HepG2 (cell line): ENCODE measurements at regions of chr11 and their contacts with region 1.

Region 1: DNA sequence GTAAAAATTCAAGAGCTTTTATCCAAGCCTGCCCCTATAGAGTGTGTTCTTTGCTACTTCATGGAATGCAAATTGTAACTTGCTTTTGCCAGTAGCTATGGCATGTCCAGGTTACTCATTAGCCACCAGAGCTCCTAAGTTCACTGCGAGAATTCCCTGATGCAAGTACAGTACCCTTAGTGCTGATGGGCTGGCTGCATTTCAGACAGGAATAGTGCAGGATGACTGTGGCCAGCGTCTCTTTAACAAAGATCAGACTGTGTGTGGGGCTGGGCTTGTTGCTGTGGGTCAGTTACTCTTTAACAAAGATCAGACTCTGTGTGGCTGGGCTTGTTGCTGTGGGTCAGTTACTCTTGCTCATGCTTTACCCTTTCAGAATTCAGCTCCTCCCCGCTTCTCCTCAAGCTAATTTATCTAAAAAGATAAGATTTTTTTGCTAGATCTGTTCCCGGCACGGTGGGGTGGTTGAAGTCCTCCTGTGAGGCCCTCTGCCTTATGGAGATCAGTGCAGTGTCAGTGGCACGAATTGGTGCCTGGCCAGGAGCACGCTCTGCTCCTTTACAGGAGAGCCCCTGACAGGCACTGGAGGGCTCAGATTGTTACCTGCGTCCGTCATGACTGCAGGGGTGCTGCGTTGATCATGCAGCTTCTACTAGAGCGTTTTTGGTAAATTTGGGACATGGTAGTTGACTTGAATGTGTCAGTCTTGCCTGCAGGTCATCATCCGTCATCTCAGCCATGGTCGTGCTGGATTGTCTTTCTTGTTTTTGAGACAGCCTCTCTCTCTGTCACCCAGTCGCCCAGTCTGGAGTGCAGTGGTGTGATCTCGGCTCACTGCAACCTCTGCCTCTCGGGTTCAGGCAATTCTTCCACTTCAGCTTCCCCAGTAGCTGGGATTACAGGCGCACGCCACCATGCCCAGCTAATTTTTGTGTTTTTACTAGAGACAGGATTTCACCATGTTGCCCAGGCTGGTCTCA is 27.0 kb downstream of the AP2A2 start:
- DNase-seq: peak; percentile 99
- ATAC-seq: peak; percentile 98
- H3K4me3 ChIP-seq: peak overlapping the region; percentile 25 to 68 (median 50); a peak in 5 of 6 replicates
- H3K27ac ChIP-seq: peak overlapping the region; percentile 95
- H3K4me1 ChIP-seq: peaks cover 85% of the 10 kb centered on the region
- H3K27me3 ChIP-seq: no peaks in the 10 kb centered on the region
- CTCF ChIP-seq: no peak; the same call in 1 of the 2 replicates
- EP300 ChIP-seq: peak in 1 of 2 experiments; percentile 77; a peak in 2 of 4 replicates
- POLR2A ChIP-seq: peak; percentile 65 to 67; a peak in 3 of 4 replicates
- RAD21 ChIP-seq: 0 out of 2 replicates have a peak, but pooled peaks have one; percentile 20

Region 2: GRCh38 chr11:520428-521176 is 432.1 kb before region 1 on chr11:
- CTCF ChIA-PET with region 1: no interaction called
- POLR2A ChIA-PET with region 1: no interaction called
- in situ Hi-C with region 1: no loop called
- intact Hi-C with region 1: no loop called
- DNase-seq: peak; percentile 28
- ATAC-seq: peak; percentile 77
- H3K4me3 ChIP-seq: no peak overlapping the region; a peak in 1 of 6 replicates
- H3K27ac ChIP-seq: no peak overlapping the region
- H3K4me1 ChIP-seq: peaks cover 40% of the 10 kb centered on the region
- H3K27me3 ChIP-seq: 0 out of 5 replicates have a peak, but pooled peaks cover 0 to under 1% of the 10 kb centered on the region in 2 experiments
- CTCF ChIP-seq: peak; percentile 83
- EP300 ChIP-seq: no peak
- POLR2A ChIP-seq: no peak
- RAD21 ChIP-seq: peak; percentile 28; the same call in 1 of the 2 replicates

Region 3: GRCh38 chr11:662689-663274 is 289.9 kb before region 1 on chr11:
- CTCF ChIA-PET with region 1: no interaction called
- POLR2A ChIA-PET with region 1: no interaction called
- in situ Hi-C with region 1: no loop called
- intact Hi-C with region 1: no loop called
- DNase-seq: peak; percentile 39
- ATAC-seq: peak; percentile 84
- H3K4me3 ChIP-seq: no peak overlapping the region
- H3K27ac ChIP-seq: no peak overlapping the region
- H3K4me1 ChIP-seq: peaks cover 10% of the 10 kb centered on the region
- H3K27me3 ChIP-seq: no peaks in the 10 kb centered on the region
- CTCF ChIP-seq: peak; percentile 91
- EP300 ChIP-seq: no peak
- POLR2A ChIP-seq: no peak
- RAD21 ChIP-seq: peak; percentile 80

Region 4: GRCh38 chr11:777288-778255 is 175.1 kb before region 1 on chr11 and contains the start of gene GATD1:
- CTCF ChIA-PET with region 1: no interaction called
- POLR2A ChIA-PET with region 1: no interaction called
- in situ Hi-C with region 1: no loop called
- intact Hi-C with region 1: no loop called
- DNase-seq: peak; percentile 73
- ATAC-seq: peak; percentile 73
- H3K4me3 ChIP-seq: peak within 1 kb of the TSS; percentile 87 to 92 (median 90)
- H3K27ac ChIP-seq: peak within 1 kb of the TSS; percentile 75
- H3K4me1 ChIP-seq: peaks cover 41% of the 10 kb centered on the region
- H3K27me3 ChIP-seq: no peaks in the 10 kb centered on the region
- CTCF ChIP-seq: no peak
- EP300 ChIP-seq: 0 out of 4 replicates have a peak, but pooled peaks of 1 of the 2 experiments have one; percentile 9
- POLR2A ChIP-seq: peak in 1 of 2 experiments; percentile 57; a peak in 2 of 4 replicates
- RAD21 ChIP-seq: 0 out of 2 replicates have a peak, but pooled peaks have one; percentile 25
- total RNA-seq, gene GATD1: 35.8 and 60.5 TPM in 2 replicates

Region 5: GRCh38 chr11:925496-926321 is 27.0 kb before region 1 on chr11 and contains the start of gene AP2A2:
- CTCF ChIA-PET with region 1: no interaction called
- POLR2A ChIA-PET with region 1: interaction called, 37 read pairs
- in situ Hi-C with region 1: no loop called
- intact Hi-C with region 1: loop called (anchors 2 kb)
- DNase-seq: peak; percentile 58
- ATAC-seq: peak; percentile 11
- H3K4me3 ChIP-seq: peak within 1 kb of the TSS; percentile 75 to 84 (median 79)
- H3K27ac ChIP-seq: peak within 1 kb of the TSS; percentile 71
- H3K4me1 ChIP-seq: peaks cover 83% of the 10 kb centered on the region
- H3K27me3 ChIP-seq: no peaks in the 10 kb centered on the region; a peak in 1 of 5 replicates
- CTCF ChIP-seq: peak; percentile 75
- EP300 ChIP-seq: no peak
- POLR2A ChIP-seq: 0 out of 4 replicates have a peak, but pooled peaks of 1 of the 2 experiments have one; percentile 8
- RAD21 ChIP-seq: peak; percentile 91
- total RNA-seq, gene AP2A2: 25.7 and 25.9 TPM in 2 replicates

Region 6: DNA sequence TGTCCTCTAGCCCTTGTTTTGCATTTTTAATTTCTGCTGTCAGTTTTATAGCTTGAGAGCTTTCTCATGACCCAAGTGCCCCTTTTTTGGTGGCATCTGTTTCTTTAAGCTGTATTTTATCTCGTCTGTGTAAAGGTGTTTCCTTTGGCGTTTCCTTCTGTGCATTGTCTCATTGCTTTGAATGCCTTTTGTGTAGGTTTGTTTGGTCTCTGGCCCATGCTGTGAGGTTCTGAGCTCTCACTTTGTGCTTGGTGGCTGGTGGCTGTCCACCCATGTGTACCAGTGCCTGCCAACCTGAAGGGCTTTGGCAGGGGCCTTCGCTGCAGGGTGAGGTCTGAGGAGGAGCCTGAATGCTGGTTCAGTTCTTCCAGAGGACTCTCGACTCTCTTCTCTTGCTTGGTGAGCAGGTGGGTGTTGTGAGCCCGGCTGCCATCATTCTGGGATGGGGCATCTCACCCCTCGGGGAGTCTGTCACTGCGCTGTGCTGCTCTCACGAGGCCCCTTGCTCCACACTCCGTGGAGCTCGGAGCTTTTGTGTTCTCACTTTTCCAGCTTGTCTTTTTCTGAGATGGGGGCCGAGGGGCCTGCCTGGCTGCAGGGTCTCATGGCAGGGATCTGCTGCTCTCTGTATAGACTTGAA is 12.1 kb before region 1 on chr11:
- CTCF ChIA-PET with region 1: no interaction called
- POLR2A ChIA-PET with region 1: interaction called, 27 read pairs
- in situ Hi-C with region 1: no loop called
- intact Hi-C with region 1: loop called (anchors 2 kb)
- DNase-seq: no peak
- ATAC-seq: no peak
- H3K4me3 ChIP-seq: no peak overlapping the region
- H3K27ac ChIP-seq: peak overlapping the region; percentile 88
- H3K4me1 ChIP-seq: peaks cover 93% of the 10 kb centered on the region
- H3K27me3 ChIP-seq: no peaks in the 10 kb centered on the region
- CTCF ChIP-seq: no peak
- EP300 ChIP-seq: no peak
- POLR2A ChIP-seq: no peak
- RAD21 ChIP-seq: no peak